ENCODE measurements at regions of chr4 and their contacts with region 1.

Region 1: DNA sequence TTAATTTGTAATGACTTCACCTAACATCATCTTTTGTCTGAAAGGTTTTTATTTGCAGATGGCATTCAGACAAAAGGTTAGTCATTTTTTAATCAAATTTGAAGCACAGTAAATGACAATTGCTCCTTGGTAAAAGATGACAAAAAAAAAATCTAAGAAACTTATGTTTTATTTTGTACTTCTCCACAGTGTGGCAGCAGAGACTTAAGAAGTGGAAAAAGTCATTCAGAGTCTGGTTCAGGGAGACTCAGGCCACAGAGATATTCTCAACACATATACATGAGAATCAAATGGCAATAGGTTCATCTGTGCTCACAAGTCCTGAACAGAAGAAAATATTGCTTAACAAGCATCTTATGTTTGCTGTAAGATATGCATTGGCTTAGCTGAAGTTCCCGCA is 436.2 kb downstream of the KCNIP4 start:
- DNase-seq: no peak
- H3K4me3 ChIP-seq: no peak overlapping the region
- H3K27ac ChIP-seq: no peak overlapping the region
- H3K4me1 ChIP-seq: no peaks in the 10 kb centered on the region
- H3K27me3 ChIP-seq: no peaks in the 10 kb centered on the region
- CTCF ChIP-seq: peak in 3 of 6 experiments; percentile 15 to 31 (median 30)
- POLR2A ChIP-seq: no peak

Region 2: DNA sequence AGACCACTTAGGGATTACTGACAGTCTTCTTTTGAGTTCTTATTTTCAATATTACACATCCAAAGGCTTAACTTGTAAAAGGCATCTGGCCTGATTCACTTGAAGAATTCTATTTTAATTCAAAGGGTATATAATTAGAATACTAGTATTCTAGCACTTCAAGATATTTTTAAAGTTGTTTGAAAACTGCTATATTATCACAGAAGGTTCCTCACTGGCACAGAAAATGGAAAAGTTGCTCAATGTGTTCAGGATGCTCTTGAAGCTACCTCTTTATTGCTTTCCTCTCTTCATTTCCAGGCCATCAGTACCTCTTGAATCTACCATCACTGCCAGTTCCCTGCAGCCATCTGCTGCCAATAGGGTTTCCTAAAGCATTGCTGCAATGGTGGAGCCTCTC is 164.8 kb after region 1 on chr4:
- intact Hi-C with region 1: no loop called
- DNase-seq: no peak
- H3K4me3 ChIP-seq: no peak overlapping the region
- H3K27ac ChIP-seq: no peak overlapping the region
- H3K4me1 ChIP-seq: no peaks in the 10 kb centered on the region
- H3K27me3 ChIP-seq: no peaks in the 10 kb centered on the region
- CTCF ChIP-seq: no peak
- POLR2A ChIP-seq: no peak

Region 3: DNA sequence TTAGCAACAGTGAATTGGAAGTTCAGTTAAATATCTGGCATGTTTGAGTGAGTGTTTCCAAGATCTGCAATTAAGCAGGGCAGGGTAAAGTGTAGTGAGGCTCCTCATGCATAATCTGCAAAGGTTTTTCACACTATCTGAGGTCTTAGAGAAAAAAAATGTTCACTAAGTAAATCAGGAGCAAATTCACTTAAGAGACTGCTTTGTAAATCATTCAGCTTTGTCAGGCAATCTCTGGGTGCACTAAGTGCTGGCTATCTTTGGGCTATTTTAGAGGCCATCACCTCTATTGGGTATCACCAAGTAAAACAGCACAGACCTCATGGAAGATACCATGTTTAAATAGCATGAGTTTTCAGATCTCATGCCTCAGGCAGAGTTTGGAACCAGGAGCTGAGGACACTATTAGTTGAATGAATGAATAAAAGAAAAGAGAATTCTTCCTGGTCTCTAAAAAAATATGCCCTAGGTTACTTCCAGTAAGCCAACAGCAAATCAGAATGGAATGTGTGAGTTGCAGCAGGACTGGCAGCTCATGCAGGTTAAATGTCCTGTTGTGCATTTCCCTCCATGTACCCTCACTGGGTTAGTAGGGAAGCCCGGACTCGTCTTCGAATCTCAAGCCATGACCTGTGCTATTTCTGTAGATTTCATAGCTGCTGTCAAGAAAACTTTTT is 240.9 kb after region 1 on chr4:
- intact Hi-C with region 1: no loop called
- DNase-seq: no peak
- H3K4me3 ChIP-seq: no peak overlapping the region
- H3K27ac ChIP-seq: no peak overlapping the region
- H3K4me1 ChIP-seq: no peaks in the 10 kb centered on the region
- H3K27me3 ChIP-seq: no peaks in the 10 kb centered on the region
- CTCF ChIP-seq: no peak
- POLR2A ChIP-seq: no peak

Region 4: DNA sequence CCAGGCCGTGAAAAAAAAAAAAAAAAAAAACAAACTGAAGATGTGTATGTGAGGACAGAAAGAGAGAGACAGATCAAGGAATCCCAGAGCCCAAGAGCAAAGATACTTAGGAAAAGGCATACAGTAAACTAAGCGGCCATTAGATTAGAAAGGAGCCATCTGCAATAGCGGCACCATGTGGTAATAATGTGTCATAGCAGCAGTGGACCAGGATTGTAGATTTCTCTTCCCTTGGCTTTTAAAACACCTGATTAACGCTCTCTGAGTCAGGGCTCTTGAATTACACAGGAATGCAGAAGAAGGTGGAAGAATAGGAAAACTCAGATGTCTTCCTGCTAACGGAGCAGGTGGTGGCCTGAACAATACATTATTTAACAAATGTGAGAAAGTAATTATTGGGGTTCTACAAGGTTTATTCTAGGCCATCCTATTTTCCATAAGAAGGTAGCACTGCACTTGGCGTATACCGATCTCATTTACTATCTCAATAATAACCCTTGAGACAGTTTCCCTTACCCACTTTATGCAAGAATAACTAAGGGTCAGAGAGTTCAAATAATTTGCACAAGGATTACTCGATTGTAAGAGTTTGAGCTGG is 253.6 kb after region 1 on chr4:
- intact Hi-C with region 1: loop called (anchors 5 kb)
- DNase-seq: no peak
- H3K4me3 ChIP-seq: no peak overlapping the region
- H3K27ac ChIP-seq: no peak overlapping the region
- H3K4me1 ChIP-seq: peaks cover 0 to 3% (median 0%) of the 10 kb centered on the region in 3 donors
- H3K27me3 ChIP-seq: no peaks in the 10 kb centered on the region
- CTCF ChIP-seq: peak in 5 of 6 experiments; percentile 67 to 76 (median 72)
- POLR2A ChIP-seq: no peak